ENCODE measurements at regions of chr7 and their contacts with region 1.

Region 1: DNA sequence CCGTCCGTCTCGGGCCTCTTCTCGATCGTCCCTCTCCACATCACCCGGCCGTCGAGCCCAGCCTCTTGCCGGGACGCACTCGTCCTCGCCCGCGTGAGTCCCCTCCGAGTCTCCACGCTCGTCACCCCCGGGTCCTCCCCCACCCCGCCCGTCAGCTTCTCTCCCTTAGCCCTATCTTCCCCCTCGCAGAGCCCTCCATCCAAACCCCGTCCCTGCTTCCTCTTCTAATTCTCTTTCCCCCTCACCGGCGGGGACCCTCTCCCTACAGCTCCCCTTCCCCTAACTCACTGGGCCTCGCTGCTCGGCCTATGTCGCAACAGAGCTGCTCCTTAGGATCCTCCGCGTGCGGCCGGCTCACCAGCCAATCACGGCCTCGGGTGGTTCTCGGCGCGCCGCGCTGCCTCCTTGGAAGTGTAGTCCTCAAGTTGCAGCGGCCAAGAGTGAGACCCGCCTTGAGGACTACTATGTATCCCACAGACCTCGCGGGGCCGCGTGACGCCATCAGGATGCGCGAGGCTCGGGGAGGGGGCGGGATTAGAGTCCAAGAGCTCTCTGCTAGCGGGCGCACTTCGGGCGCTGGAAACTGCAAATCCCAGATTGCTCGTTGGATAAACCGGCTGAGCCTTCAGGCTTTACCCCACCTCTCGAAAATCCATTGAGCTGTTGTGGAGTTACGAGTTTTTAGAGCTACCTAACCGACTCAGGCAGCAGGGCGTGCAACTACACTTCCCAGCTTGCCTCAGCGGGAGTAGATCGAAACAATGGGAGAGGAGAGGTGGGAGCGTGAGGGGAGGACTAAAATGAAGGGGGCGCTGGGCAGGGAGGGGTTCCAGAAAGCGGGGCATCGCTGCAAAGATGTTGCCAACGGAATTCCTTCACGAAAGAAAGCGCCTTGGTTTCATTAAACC is at the start of gene ABCF2:
- DNase-seq: peak; percentile 98 to 99
- H3K4me3 ChIP-seq: peak within 1 kb of the TSS; percentile 81
- H3K4me3 Mint-ChIP-seq: peak within 1 kb of the TSS; percentile 88
- H3K27ac Mint-ChIP-seq: peak within 1 kb of the TSS; percentile 82
- H3K4me1 ChIP-seq: peaks cover 15% of the 10 kb centered on the region
- H3K4me1 Mint-ChIP-seq: peaks cover 21% of the 10 kb centered on the region
- H3K27me3 ChIP-seq: no peaks in the 10 kb centered on the region
- H3K27me3 Mint-ChIP-seq: no peaks in the 10 kb centered on the region
- CTCF ChIP-seq: no peak
- total RNA-seq, gene ABCF2: 50.8 and 57.8 TPM in 2 replicates

Region 2: DNA sequence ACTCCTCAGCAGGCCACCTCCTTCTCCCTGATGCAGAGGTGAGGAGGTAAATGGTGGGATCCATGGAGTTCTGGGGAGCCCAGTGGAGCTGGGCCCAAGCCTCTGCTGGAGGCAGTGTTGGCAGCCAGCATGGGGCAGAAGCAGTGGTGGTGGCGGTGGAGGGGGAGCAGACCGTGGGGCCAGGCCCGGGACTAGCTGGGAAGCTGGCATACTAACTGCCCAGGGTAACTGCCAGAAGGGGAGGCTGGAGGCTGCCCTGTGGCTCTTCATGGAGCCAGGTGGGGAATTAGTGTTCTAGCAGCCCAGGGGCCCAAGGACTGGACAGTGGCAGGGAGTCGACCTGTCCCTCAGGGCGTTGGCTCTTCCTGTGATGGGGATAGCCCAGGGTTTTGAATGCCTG is 37.5 kb after region 1 on chr7:
- CTCF ChIA-PET with region 1: interaction called, 3 read pairs
- POLR2A ChIA-PET with region 1: interaction called, 10 read pairs
- intact Hi-C with region 1: no loop called
- DNase-seq: no peak
- H3K4me3 ChIP-seq: no peak overlapping the region
- H3K4me3 Mint-ChIP-seq: no peak overlapping the region
- H3K27ac Mint-ChIP-seq: no peak overlapping the region
- H3K4me1 ChIP-seq: no peaks in the 10 kb centered on the region
- H3K4me1 Mint-ChIP-seq: no peaks in the 10 kb centered on the region
- H3K27me3 ChIP-seq: no peaks in the 10 kb centered on the region
- H3K27me3 Mint-ChIP-seq: peaks cover 7% of the 10 kb centered on the region
- CTCF ChIP-seq: no peak

Region 3: DNA sequence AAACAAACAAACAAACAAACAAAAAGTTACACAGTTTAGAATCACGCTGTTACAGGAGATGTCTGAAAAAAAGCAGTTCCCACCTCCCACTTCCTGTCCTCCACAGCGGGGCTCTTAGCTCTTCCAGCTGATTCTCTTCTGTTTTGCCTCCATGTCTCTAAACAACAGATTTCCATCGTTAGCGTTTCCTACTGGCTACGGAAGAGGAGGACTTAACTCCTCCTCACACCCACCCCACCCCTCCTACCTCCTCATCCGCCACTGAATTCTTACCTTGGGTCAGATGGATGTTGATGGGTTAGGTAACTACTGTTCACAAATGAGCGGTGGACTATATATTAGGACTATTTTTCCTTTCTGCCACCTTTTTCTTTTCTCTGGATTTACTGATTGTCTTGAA is 77.7 kb after region 1 on chr7:
- CTCF ChIA-PET with region 1: no interaction called
- POLR2A ChIA-PET with region 1: no interaction called
- intact Hi-C with region 1: loop called (anchors 1 kb)
- DNase-seq: no peak
- H3K4me3 ChIP-seq: no peak overlapping the region
- H3K4me3 Mint-ChIP-seq: peak overlapping the region; percentile 4
- H3K27ac Mint-ChIP-seq: no peak overlapping the region
- H3K4me1 ChIP-seq: no peaks in the 10 kb centered on the region
- H3K4me1 Mint-ChIP-seq: no peaks in the 10 kb centered on the region
- H3K27me3 ChIP-seq: no peaks in the 10 kb centered on the region; the same call in none of the 2 replicates
- H3K27me3 Mint-ChIP-seq: peaks cover 26% of the 10 kb centered on the region
- CTCF ChIP-seq: no peak

Measured in Caco-2 (cell line).